ENCODE measurements at regions of chr1 and their contacts with region 1.

Region 1: DNA sequence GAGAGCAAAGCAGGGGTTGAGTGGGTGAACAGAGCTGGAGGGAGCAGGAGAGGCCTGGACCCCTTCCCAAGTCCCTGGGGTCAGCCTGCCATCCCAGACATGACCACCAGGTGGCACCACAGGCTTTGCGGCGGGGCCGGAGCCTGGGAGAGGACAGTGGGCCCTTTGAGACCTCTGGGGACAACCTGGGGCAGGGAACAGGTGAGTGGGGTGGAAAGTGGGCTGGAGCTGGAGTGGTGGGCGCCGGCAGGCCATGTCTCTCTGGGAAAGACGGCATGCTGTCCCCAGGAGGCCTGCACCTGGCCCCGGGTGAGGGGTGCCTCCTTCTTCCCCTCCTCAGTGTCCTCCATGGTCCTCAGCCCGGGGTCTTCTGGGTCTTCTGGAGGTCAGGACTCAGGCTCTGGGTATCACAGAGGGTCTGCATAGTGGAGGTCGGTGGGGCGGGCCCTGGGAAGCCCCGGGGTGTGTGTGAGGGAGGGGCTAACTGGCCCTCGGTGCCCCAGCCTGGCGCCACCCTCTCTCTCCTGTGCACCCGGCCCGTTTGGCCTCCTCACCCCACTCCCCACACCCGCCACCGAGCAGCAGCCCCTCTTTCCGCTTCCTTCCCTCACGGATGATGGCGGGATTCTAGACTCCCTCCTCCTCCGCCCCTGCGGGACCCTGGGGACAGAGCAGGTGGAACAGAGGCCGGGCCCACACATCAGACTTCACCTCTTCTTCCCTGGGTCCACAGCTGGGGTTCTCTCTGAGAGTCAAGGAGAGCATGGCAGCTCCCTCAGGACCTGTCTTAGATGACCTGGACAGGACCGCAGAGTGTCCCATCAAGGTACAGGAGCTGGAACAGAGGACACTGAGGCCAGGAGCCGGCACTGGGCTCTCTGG is 28.4 kb upstream of the PKP1 start:
- DNase-seq: peak; percentile 56 to 85 (median 80)
- H3K4me3 ChIP-seq: no peak overlapping the region
- H3K27ac ChIP-seq: no peak overlapping the region
- H3K4me1 ChIP-seq: no peaks in the 10 kb centered on the region
- H3K27me3 ChIP-seq: no peaks in the 10 kb centered on the region
- CTCF ChIP-seq: peak; percentile 90

Region 2: GRCh38 chr1:201206176-201206575 is 48.7 kb before region 1 on chr1:
- intact Hi-C with region 1: no loop called
- DNase-seq: peak in 1 of 5 donors; percentile 45
- H3K4me3 ChIP-seq: no peak overlapping the region
- H3K27ac ChIP-seq: no peak overlapping the region
- H3K4me1 ChIP-seq: no peaks in the 10 kb centered on the region
- H3K27me3 ChIP-seq: no peaks in the 10 kb centered on the region
- CTCF ChIP-seq: no peak

Region 3: GRCh38 chr1:201361652-201362504 is 107.0 kb after region 1 on chr1:
- intact Hi-C with region 1: loop called (anchors 5 kb)
- DNase-seq: peak; percentile 41 to 75 (median 55)
- H3K4me3 ChIP-seq: no peak overlapping the region
- H3K27ac ChIP-seq: no peak overlapping the region
- H3K4me1 ChIP-seq: peaks cover 0 to 3% (median 0%) of the 10 kb centered on the region in 3 donors
- H3K27me3 ChIP-seq: no peaks in the 10 kb centered on the region
- CTCF ChIP-seq: peak; percentile 80

Measured in kidney (tissue), 22 donors.